PC-3 (cell line): ENCODE measurements at regions of chr17 and their contacts with region 1.

Region 1: GRCh38 chr17:44968226-44969143 is at the start of gene C1QL1:
- DNase-seq: peak; percentile 96
- ATAC-seq: peak; percentile 98
- H3K4me3 ChIP-seq: peak within 1 kb of the TSS; percentile 74
- H3K27ac ChIP-seq: no peak within 1 kb of the TSS
- H3K4me1 ChIP-seq: peaks cover 18% of the 10 kb centered on the region; the same call in 1 of the 2 replicates
- H3K27me3 ChIP-seq: peaks cover 14% of the 10 kb centered on the region
- CTCF ChIP-seq: no peak
- total RNA-seq, gene C1QL1: 2.8 and 4.1 TPM in 2 replicates

Region 2: GRCh38 chr17:44794851-44795413 is 173.6 kb before region 1 on chr17:
- CTCF ChIA-PET with region 1: no interaction called
- POLR2A ChIA-PET with region 1: no interaction called
- intact Hi-C with region 1: no loop called
- DNase-seq: peak; percentile 94
- ATAC-seq: peak; percentile 84
- H3K4me3 ChIP-seq: no peak overlapping the region
- H3K27ac ChIP-seq: peak overlapping the region; percentile 82
- H3K4me1 ChIP-seq: peaks cover 24% of the 10 kb centered on the region
- H3K27me3 ChIP-seq: no peaks in the 10 kb centered on the region
- CTCF ChIP-seq: no peak

Region 3: DNA sequence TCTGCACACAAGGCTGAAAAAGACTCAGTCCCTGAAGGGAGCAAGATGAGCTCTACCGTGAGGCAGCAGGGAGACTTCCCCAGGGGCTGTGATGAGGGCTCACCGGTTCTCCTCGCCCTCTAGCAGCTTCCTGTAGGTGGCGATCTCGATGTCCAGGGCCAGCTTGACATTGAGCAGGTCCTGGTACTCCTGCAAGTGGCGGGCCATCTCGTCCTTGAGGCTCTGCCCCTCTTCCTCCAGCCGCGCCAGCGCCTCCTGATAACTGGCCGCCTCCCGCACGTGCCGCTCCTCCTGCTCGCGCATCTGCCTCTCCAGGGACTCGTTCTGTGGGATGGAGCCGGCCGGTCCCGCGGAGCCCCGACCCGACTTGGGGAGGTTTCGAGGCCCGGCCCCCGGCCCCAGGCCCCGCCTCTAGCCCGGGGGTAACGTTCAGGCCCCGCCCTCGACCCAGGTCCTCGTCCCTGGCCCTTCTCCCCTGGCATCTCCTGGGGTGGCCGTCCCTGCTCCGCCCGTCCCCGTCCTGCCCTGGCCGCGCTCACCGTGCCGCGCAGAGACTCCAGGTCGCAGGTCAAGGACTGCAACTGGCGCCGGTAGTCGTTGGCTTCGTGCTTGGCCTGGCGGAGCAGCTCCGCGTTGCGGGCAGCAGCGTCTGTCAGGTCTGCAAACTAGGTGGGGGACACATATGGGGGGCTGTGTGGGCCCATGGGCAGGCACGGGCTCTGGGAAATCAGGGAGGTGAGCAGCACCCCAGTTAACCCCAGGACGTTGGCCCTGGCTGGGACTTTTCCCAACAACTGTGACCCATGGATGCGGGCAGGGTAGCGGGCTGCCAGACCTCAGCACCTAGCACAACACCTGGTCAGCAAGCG is 57.1 kb before region 1 on chr17:
- CTCF ChIA-PET with region 1: interaction called, 10 read pairs
- POLR2A ChIA-PET with region 1: no interaction called
- intact Hi-C with region 1: no loop called
- DNase-seq: peak; percentile 48
- ATAC-seq: no peak; the same call in 1 of the 2 replicates
- H3K4me3 ChIP-seq: no peak overlapping the region
- H3K27ac ChIP-seq: no peak overlapping the region
- H3K4me1 ChIP-seq: peaks cover 30% of the 10 kb centered on the region
- H3K27me3 ChIP-seq: no peaks in the 10 kb centered on the region
- CTCF ChIP-seq: peak; percentile 61

Region 4: GRCh38 chr17:44947461-44948314 is 20.8 kb before region 1 on chr17 and contains the start of gene KIF18B:
- CTCF ChIA-PET with region 1: interaction called, 5 read pairs
- POLR2A ChIA-PET with region 1: no interaction called
- intact Hi-C with region 1: loop called (anchors 1 kb)
- DNase-seq: peak; percentile 99
- ATAC-seq: peak; percentile 97
- H3K4me3 ChIP-seq: peak within 1 kb of the TSS; percentile 87
- H3K27ac ChIP-seq: peak within 1 kb of the TSS; percentile 72
- H3K4me1 ChIP-seq: peaks cover 36% of the 10 kb centered on the region
- H3K27me3 ChIP-seq: no peaks in the 10 kb centered on the region
- CTCF ChIP-seq: peak; percentile 37; the same call in 1 of the 2 replicates
- total RNA-seq, gene KIF18B: 25.0 and 28.5 TPM in 2 replicates

Region 5: GRCh38 chr17:44988044-44988942 is 19.8 kb after region 1 on chr17:
- CTCF ChIA-PET with region 1: no interaction called
- POLR2A ChIA-PET with region 1: interaction called, 11 read pairs
- intact Hi-C with region 1: no loop called
- DNase-seq: no peak
- ATAC-seq: no peak
- H3K4me3 ChIP-seq: no peak overlapping the region
- H3K27ac ChIP-seq: no peak overlapping the region
- H3K4me1 ChIP-seq: peaks cover 9% of the 10 kb centered on the region; the same call in 1 of the 2 replicates
- H3K27me3 ChIP-seq: no peaks in the 10 kb centered on the region
- CTCF ChIP-seq: no peak

Region 6: GRCh38 chr17:45060797-45061605 is 92.5 kb after region 1 on chr17 and contains the start of gene NMT1:
- CTCF ChIA-PET with region 1: no interaction called
- POLR2A ChIA-PET with region 1: no interaction called
- intact Hi-C with region 1: no loop called
- DNase-seq: peak; percentile 100
- ATAC-seq: peak; percentile 90
- H3K4me3 ChIP-seq: peak within 1 kb of the TSS; percentile 82
- H3K27ac ChIP-seq: peak within 1 kb of the TSS; percentile 75
- H3K4me1 ChIP-seq: peaks cover 26% of the 10 kb centered on the region
- H3K27me3 ChIP-seq: no peaks in the 10 kb centered on the region
- CTCF ChIP-seq: no peak
- total RNA-seq, gene NMT1: 99.2 and 117 TPM in 2 replicates